Panc1 (cell line): ENCODE measurements at regions of chr10 and their contacts with region 1.

Region 1: DNA sequence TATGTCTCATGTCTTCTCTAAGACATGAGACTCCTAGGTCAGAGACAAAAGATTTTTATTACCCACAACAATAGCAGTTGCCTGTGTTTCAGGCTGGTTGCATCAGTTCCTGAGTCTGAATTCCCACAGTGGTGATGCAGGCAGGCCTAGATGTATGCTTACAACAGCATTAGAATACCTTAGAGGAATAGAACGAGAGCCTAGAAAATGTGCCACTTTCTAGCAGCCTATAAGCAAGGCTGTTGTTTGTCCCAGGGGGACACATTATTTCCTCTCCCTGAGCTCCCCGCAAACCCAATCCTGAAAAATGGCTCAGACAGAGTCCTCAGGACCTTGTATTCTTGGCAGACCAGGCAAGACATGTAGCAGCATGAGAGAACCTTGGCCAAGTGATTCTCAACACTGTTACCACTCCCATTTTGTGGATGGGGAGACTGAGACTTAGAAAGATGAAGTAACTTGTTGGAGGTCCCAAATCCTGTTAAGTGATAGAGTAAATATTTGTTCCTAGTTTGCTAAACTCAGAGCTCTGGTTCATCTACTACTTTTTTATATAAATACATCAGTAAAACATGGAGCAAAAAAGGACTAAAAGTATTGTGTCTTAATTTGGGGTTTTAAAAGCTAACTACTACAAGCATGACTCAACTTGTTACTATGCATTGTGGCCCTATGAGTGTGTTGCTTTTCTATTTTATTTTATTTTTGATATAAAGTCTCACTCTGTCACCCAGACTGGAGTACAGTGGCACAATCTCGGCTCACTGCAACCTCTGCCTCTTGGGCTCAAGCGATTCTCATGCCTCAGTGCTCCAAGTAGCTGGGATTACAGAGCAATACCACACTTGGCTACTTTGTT is 14.2 kb downstream of the VTI1A start:
- DNase-seq: peak; percentile 86
- ATAC-seq: no peak
- H3K4me3 ChIP-seq: no peak overlapping the region
- H3K27ac ChIP-seq: peak overlapping the region; percentile 70; the same call in 1 of the 2 replicates
- H3K4me1 ChIP-seq: no peaks in the 10 kb centered on the region
- H3K27me3 ChIP-seq: no peaks in the 10 kb centered on the region
- CTCF ChIP-seq: no peak

Region 2: DNA sequence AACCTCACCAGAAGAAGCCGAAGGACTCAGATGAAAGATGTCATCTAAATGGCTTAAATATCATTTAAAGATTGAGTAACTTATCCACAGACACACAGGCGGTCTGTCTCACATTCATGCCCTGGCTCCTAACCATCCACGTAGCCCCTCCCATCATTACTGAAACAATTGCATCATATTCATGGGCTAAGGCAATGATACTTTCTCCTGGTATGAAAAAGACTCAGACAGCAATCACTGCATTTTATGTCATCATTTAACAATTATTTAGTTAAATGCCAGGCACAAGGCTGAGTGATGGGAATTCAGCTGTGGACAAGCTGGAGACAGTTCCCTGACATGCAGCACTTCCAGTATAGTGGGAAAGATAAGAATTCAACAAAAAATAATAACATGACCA is 189.3 kb before region 1 on chr10:
- CTCF ChIA-PET with region 1: no interaction called
- POLR2A ChIA-PET with region 1: no interaction called
- in situ Hi-C with region 1: no loop called
- intact Hi-C with region 1: no loop called
- DNase-seq: no peak
- ATAC-seq: no peak
- H3K4me3 ChIP-seq: no peak overlapping the region
- H3K27ac ChIP-seq: no peak overlapping the region
- H3K4me1 ChIP-seq: no peaks in the 10 kb centered on the region
- H3K27me3 ChIP-seq: peaks cover 10% of the 10 kb centered on the region; the same call in 1 of the 2 replicates
- CTCF ChIP-seq: no peak

Region 3: DNA sequence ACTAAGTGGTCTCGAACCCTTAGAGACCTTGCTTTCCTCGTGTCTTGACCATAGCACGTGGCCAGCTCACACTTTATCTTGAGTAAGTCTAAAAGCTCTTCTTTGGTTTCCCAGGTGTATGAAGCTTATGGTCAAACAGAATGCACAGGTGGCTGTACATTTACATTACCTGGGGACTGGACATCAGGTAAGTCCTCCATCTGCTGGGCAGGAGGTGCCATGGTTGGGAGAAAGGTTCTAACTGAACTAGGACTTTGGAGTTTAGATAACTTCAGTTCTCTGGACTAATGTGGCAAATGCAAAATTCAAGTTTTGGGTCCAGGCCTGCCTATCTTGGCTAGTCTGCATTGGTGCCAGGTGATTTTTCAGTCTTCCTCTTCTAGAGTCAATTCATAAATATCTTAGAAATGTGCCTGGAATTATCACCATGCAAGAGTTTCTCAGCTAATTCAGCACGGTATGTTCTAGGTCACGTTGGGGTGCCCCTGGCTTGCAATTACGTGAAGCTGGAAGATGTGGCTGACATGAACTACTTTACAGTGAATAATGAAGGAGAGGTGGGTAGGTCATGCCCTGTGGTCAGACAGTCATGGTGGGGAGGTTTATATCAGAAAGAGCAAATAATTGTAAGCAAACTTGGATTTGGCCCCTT is 39.7 kb before region 1 on chr10:
- CTCF ChIA-PET with region 1: interaction called, 10 read pairs
- POLR2A ChIA-PET with region 1: no interaction called
- in situ Hi-C with region 1: no loop called
- intact Hi-C with region 1: no loop called
- DNase-seq: no peak
- ATAC-seq: no peak
- H3K4me3 ChIP-seq: no peak overlapping the region
- H3K27ac ChIP-seq: no peak overlapping the region
- H3K4me1 ChIP-seq: no peaks in the 10 kb centered on the region
- H3K27me3 ChIP-seq: no peaks in the 10 kb centered on the region
- CTCF ChIP-seq: no peak

Region 4: GRCh38 chr10:112502536-112502935 is 41.3 kb after region 1 on chr10:
- CTCF ChIA-PET with region 1: interaction called, 11 read pairs
- POLR2A ChIA-PET with region 1: no interaction called
- in situ Hi-C with region 1: no loop called
- intact Hi-C with region 1: no loop called
- DNase-seq: no peak
- ATAC-seq: no peak
- H3K4me3 ChIP-seq: no peak overlapping the region
- H3K27ac ChIP-seq: no peak overlapping the region
- H3K4me1 ChIP-seq: peaks cover 2% of the 10 kb centered on the region; the same call in 1 of the 2 replicates
- H3K27me3 ChIP-seq: no peaks in the 10 kb centered on the region
- CTCF ChIP-seq: no peak

Region 5: GRCh38 chr10:112631501-112632410 is 170.5 kb after region 1 on chr10:
- CTCF ChIA-PET with region 1: no interaction called
- POLR2A ChIA-PET with region 1: no interaction called
- in situ Hi-C with region 1: no loop called
- intact Hi-C with region 1: no loop called
- DNase-seq: no peak
- ATAC-seq: peak; percentile 56; the same call in 1 of the 2 replicates
- H3K4me3 ChIP-seq: no peak overlapping the region
- H3K27ac ChIP-seq: no peak overlapping the region
- H3K4me1 ChIP-seq: no peaks in the 10 kb centered on the region; the same call in 1 of the 2 replicates
- H3K27me3 ChIP-seq: no peaks in the 10 kb centered on the region
- CTCF ChIP-seq: no peak

Region 6: GRCh38 chr10:112783351-112784021 is 322.2 kb after region 1 on chr10:
- CTCF ChIA-PET with region 1: no interaction called
- POLR2A ChIA-PET with region 1: no interaction called
- in situ Hi-C with region 1: no loop called
- intact Hi-C with region 1: no loop called
- DNase-seq: no peak
- ATAC-seq: no peak
- H3K4me3 ChIP-seq: no peak overlapping the region
- H3K27ac ChIP-seq: peak overlapping the region; percentile 58; the same call in 1 of the 2 replicates
- H3K4me1 ChIP-seq: peaks cover 18% of the 10 kb centered on the region
- H3K27me3 ChIP-seq: no peaks in the 10 kb centered on the region
- CTCF ChIP-seq: no peak

Region 7: GRCh38 chr10:113035791-113036190 is 574.5 kb after region 1 on chr10:
- CTCF ChIA-PET with region 1: no interaction called
- POLR2A ChIA-PET with region 1: no interaction called
- in situ Hi-C with region 1: no loop called
- intact Hi-C with region 1: no loop called
- DNase-seq: no peak
- ATAC-seq: no peak
- H3K4me3 ChIP-seq: no peak overlapping the region
- H3K27ac ChIP-seq: peak overlapping the region; percentile 60
- H3K4me1 ChIP-seq: peaks cover 31% of the 10 kb centered on the region
- H3K27me3 ChIP-seq: no peaks in the 10 kb centered on the region
- CTCF ChIP-seq: no peak